Ovary (tissue), 10 donors: ENCODE measurements at regions of chr4 and their contacts with region 1.

Region 1: GRCh38 chr4:189206953-189207352 is 733.7 kb upstream of the FRG1 start:
- DNase-seq: no peak
- H3K4me3 ChIP-seq: no peak overlapping the region
- H3K27ac ChIP-seq: no peak overlapping the region
- H3K4me1 ChIP-seq: no peaks in the 10 kb centered on the region
- H3K27me3 ChIP-seq: no peaks in the 10 kb centered on the region
- CTCF ChIP-seq: no peak
- EP300 ChIP-seq: no peak
- POLR2A ChIP-seq: no peak

Region 2: DNA sequence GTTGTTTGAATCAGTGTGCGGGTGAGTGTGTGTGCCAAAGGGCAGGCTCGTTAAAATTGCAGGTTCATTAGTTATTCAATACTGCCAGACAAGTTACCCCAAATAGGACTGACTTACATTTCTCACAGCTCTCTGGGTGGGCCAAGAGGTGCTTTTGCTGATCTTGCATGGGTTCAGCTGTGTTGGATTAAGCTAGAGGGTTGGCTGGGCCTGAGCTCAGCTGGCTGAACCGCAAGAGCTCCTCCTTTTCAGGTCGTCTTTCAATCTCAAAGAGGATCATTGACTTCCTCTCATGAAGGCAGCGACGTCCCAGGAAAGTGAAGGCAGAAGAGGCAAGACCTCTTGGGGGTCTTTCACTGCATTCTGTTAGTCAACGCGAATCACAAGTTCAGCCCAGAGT is 390.4 kb after region 1 on chr4:
- intact Hi-C with region 1: no loop called
- DNase-seq: no peak
- H3K4me3 ChIP-seq: no peak overlapping the region
- H3K27ac ChIP-seq: no peak overlapping the region
- H3K4me1 ChIP-seq: no peaks in the 10 kb centered on the region
- H3K27me3 ChIP-seq: no peaks in the 10 kb centered on the region
- CTCF ChIP-seq: no peak
- EP300 ChIP-seq: no peak
- POLR2A ChIP-seq: no peak

Region 3: DNA sequence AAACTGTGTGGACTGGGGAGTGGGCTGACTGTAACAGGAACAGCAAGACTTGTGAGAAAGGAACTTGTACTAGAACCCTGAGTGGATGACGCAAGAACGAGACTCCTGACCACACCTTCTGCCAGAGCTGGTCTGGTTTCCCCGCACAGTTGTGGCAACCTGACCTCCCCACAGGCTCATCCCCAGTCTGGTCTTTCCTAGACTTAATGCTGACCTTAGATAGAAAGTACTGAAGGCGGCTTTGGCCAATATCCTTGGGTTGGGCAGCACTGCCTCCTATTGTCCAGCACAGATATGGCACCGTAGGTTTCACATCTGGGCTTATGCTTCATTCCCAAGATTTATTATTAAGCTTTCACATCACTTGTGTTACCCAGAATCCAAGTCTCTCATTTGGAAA is 595.9 kb after region 1 on chr4:
- intact Hi-C with region 1: loop called in 1 of 4 experiments (anchors 5 kb)
- DNase-seq: no peak
- H3K4me3 ChIP-seq: no peak overlapping the region
- H3K27ac ChIP-seq: no peak overlapping the region
- H3K4me1 ChIP-seq: no peaks in the 10 kb centered on the region
- H3K27me3 ChIP-seq: no peaks in the 10 kb centered on the region
- CTCF ChIP-seq: no peak
- EP300 ChIP-seq: no peak
- POLR2A ChIP-seq: no peak